Panc1 (cell line): ENCODE measurements at regions of chr14 and their contacts with region 1.

Region 1: GRCh38 chr14:65412032-65412846 is at the start of gene FUT8:
- DNase-seq: peak; percentile 79
- ATAC-seq: peak; percentile 93
- H3K4me3 ChIP-seq: peak within 1 kb of the TSS; percentile 71 to 92
- H3K27ac ChIP-seq: peak within 1 kb of the TSS; percentile 89
- H3K4me1 ChIP-seq: peaks cover 16% of the 10 kb centered on the region
- H3K27me3 ChIP-seq: no peaks in the 10 kb centered on the region
- CTCF ChIP-seq: peak; percentile 75
- total RNA-seq, gene FUT8: 31.4 TPM

Region 2: DNA sequence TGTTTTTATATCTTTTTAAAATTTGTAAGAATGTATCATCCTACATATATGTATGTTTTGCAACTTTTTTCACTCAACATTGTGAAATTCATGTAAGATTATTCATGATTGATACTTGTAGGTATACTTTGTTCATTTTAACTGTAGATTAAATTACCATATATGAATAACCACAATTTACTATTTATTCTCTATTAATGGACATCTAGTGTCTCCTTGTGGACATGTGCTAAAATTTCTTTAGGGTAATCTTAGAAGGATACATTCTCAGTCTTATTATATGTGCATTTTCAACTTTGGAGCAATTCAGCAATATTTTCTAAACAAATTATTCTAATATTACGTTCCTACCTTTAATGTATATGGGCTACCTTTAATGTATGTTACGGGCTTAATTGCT is 192.7 kb after region 1 on chr14:
- CTCF ChIA-PET with region 1: no interaction called
- POLR2A ChIA-PET with region 1: no interaction called
- in situ Hi-C with region 1: no loop called
- intact Hi-C with region 1: loop called (anchors 5 kb)
- DNase-seq: no peak
- ATAC-seq: no peak
- H3K4me3 ChIP-seq: no peak overlapping the region
- H3K27ac ChIP-seq: no peak overlapping the region
- H3K4me1 ChIP-seq: no peaks in the 10 kb centered on the region
- H3K27me3 ChIP-seq: no peaks in the 10 kb centered on the region
- CTCF ChIP-seq: no peak; the same call in 1 of the 2 replicates

Region 3: DNA sequence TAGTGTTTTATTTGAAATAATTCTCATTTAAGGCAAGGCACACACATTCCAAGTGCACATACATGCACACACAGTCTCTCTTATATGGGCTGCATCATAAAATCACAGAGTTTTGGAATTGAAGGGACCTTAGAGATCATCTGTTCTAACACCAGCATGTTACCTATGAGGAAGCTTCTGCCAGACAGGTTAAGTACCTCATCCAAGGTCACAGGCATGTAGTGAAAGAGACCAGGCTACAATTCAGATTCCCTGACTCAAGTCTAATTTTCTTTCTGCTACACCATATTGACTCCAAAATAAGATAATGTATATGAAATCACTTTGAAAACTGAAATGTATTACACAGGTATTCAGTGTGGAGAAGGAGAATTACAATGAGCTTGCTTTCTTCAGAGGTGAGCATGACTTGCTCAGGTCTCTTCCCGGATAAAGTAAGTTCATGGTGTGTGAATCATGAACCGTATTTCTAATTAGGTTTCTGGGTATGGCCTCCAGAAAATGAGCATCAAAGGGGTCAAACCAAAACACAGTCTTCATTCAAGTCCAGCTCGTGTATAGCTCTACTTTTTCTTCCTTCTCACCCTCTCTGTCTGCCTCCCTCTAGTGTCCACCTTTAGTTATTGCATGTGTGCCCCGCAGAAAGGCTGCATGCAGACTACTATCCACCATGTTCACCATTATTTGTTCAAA is 412.2 kb after region 1 on chr14:
- CTCF ChIA-PET with region 1: interaction called, 17 read pairs
- POLR2A ChIA-PET with region 1: no interaction called
- in situ Hi-C with region 1: no loop called
- intact Hi-C with region 1: loop called (anchors 5 kb)
- DNase-seq: peak; percentile 55
- ATAC-seq: peak; percentile 70; the same call in 1 of the 2 replicates
- H3K4me3 ChIP-seq: no peak overlapping the region
- H3K27ac ChIP-seq: no peak overlapping the region
- H3K4me1 ChIP-seq: no peaks in the 10 kb centered on the region
- H3K27me3 ChIP-seq: peaks cover 7% of the 10 kb centered on the region; the same call in 1 of the 2 replicates
- CTCF ChIP-seq: peak; percentile 85

Region 4: GRCh38 chr14:65958664-65959562 is 546.7 kb after region 1 on chr14:
- CTCF ChIA-PET with region 1: interaction called, 7 read pairs
- POLR2A ChIA-PET with region 1: interaction called, 10 read pairs
- in situ Hi-C with region 1: no loop called
- intact Hi-C with region 1: no loop called
- DNase-seq: no peak
- ATAC-seq: no peak
- H3K4me3 ChIP-seq: no peak overlapping the region
- H3K27ac ChIP-seq: no peak overlapping the region
- H3K4me1 ChIP-seq: no peaks in the 10 kb centered on the region
- H3K27me3 ChIP-seq: no peaks in the 10 kb centered on the region; the same call in 1 of the 2 replicates
- CTCF ChIP-seq: peak; percentile 45; the same call in 1 of the 2 replicates